ENCODE measurements at regions of chrX and their contacts with region 1.

Region 1: GRCh38 chrX:151151665-151152267 is 24.6 kb upstream of the GPR50 start:
- DNase-seq: peak; percentile 71
- H3K4me3 Mint-ChIP-seq: no peak overlapping the region
- H3K27ac Mint-ChIP-seq: no peak overlapping the region
- H3K4me1 Mint-ChIP-seq: peaks cover 5% of the 10 kb centered on the region
- H3K27me3 Mint-ChIP-seq: peaks cover 36% of the 10 kb centered on the region
- CTCF ChIP-seq: peak; percentile 61

Region 2: GRCh38 chrX:151359931-151360871 is 208.4 kb after region 1 on chrX:
- CTCF ChIA-PET with region 1: interaction called, 9 read pairs
- POLR2A ChIA-PET with region 1: no interaction called
- intact Hi-C with region 1: loop called (anchors 1 kb)
- DNase-seq: peak; percentile 39
- H3K4me3 Mint-ChIP-seq: no peak overlapping the region
- H3K27ac Mint-ChIP-seq: no peak overlapping the region
- H3K4me1 Mint-ChIP-seq: no peaks in the 10 kb centered on the region
- H3K27me3 Mint-ChIP-seq: no peaks in the 10 kb centered on the region
- CTCF ChIP-seq: peak; percentile 65

Region 3: GRCh38 chrX:151680805-151681204 is 529.0 kb after region 1 on chrX:
- CTCF ChIA-PET with region 1: interaction called, 14 read pairs
- POLR2A ChIA-PET with region 1: no interaction called
- intact Hi-C with region 1: loop called (anchors 1 kb)
- DNase-seq: peak; percentile 73
- H3K4me3 Mint-ChIP-seq: no peak overlapping the region
- H3K27ac Mint-ChIP-seq: no peak overlapping the region
- H3K4me1 Mint-ChIP-seq: peaks cover 6% of the 10 kb centered on the region
- H3K27me3 Mint-ChIP-seq: no peaks in the 10 kb centered on the region
- CTCF ChIP-seq: peak; percentile 60

Region 4: GRCh38 chrX:152821145-152821765 is 1669.5 kb after region 1 on chrX:
- CTCF ChIA-PET with region 1: interaction called, 4 read pairs
- POLR2A ChIA-PET with region 1: no interaction called
- intact Hi-C with region 1: loop called (anchors 2 kb)
- DNase-seq: peak; percentile 54
- H3K4me3 Mint-ChIP-seq: no peak overlapping the region
- H3K27ac Mint-ChIP-seq: no peak overlapping the region
- H3K4me1 Mint-ChIP-seq: peaks cover 4% of the 10 kb centered on the region
- H3K27me3 Mint-ChIP-seq: no peaks in the 10 kb centered on the region
- CTCF ChIP-seq: peak; percentile 45

Measured in MCF 10A (cell line).